ENCODE measurements at regions of chr9 and their contacts with region 1.

Region 1: DNA sequence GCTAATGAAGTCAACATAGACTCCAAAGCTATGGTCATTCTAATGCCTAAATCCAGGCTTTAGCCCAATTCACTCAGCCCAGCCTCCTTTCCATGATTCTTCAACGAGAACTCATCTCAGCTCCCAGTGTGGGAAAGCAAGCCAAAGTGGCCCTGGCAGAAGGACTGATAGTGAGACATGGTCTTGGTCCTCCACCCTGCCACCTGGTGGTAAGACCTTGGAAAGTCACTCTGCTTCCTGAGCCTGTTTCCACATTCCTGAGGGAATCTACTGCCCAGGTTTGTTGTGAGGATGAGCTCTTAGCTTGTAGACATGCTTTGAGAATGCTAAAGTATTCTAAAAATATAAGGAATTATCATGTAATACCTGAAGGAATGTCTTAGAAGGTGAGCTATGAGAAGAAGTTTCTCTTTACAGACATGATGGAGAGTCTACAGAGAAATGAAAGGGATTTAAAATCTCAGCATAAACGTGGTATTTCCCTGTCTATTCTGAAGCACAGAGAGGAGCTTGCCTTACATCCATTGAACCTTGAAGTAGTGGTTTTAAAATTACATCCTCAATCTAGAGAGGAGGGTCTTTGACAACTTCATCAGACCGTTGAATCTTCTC is 173.5 kb downstream of the TRIM32 start:
- DNase-seq: no peak
- ATAC-seq: peak; percentile 78
- H3K4me3 ChIP-seq: no peak overlapping the region
- H3K27ac ChIP-seq: no peak overlapping the region
- H3K4me1 ChIP-seq: no peaks in the 10 kb centered on the region
- H3K27me3 ChIP-seq: no peaks in the 10 kb centered on the region
- CTCF ChIP-seq: peak; percentile 60 to 79 (median 77)
- EP300 ChIP-seq: no peak
- POLR2A ChIP-seq: no peak
- RAD21 ChIP-seq: peak; percentile 64

Region 2: GRCh38 chr9:116837018-116837989 is 23.3 kb before region 1 on chr9:
- CTCF ChIA-PET with region 1: interaction called, 14 read pairs
- POLR2A ChIA-PET with region 1: no interaction called
- RAD21 ChIA-PET with region 1: no interaction called
- SMC1A ChIA-PET with region 1: interaction called, 3 read pairs
- in situ Hi-C with region 1: no loop called
- intact Hi-C with region 1: no loop called
- DNase-seq: no peak
- ATAC-seq: 0 out of 3 replicates have a peak, but pooled peaks have one; percentile 18
- H3K4me3 ChIP-seq: no peak overlapping the region
- H3K27ac ChIP-seq: no peak overlapping the region
- H3K4me1 ChIP-seq: no peaks in the 10 kb centered on the region
- H3K27me3 ChIP-seq: no peaks in the 10 kb centered on the region; a peak in 1 of 4 replicates
- CTCF ChIP-seq: no peak
- EP300 ChIP-seq: no peak
- POLR2A ChIP-seq: no peak
- RAD21 ChIP-seq: no peak

Region 3: DNA sequence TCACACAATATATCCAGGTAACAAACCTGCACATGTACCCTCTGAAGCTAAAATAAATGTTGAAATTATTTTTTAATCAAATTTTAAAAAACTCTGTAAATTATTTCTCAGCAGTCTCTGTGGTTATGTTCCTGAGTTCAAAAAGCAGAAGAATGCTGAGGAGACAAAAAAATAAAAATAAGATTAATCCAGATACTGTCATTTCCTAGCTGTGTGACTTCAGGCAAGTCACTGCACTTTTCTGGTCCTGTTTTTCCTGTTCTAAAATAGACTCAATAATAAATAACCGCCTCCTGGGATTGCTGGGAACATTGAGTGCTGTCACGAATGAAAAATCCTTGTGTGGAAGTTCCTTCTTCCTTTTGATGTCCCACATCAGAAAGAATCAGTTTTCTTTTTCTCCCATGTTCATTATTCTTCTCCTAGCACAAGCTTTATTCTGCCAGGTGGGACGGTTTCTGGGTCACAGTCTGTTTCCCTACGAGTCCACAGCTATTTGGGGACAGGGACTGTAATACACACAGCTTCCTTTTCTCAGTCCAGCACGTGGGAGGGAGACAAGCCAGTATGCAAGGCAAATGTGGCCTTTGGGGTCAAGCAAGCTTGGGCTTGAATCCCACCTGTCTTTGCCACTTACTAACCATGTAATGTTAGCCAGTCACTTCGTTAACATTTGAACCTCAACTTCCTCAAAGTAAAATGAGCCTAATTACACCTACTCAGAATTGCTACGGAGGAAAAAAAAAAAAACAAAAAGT is 16.6 kb before region 1 on chr9:
- CTCF ChIA-PET with region 1: interaction called, 25 read pairs
- POLR2A ChIA-PET with region 1: no interaction called
- RAD21 ChIA-PET with region 1: no interaction called
- SMC1A ChIA-PET with region 1: interaction called, 5 read pairs
- in situ Hi-C with region 1: no loop called
- intact Hi-C with region 1: no loop called
- DNase-seq: no peak
- ATAC-seq: peak; percentile 70
- H3K4me3 ChIP-seq: no peak overlapping the region
- H3K27ac ChIP-seq: no peak overlapping the region
- H3K4me1 ChIP-seq: no peaks in the 10 kb centered on the region
- H3K27me3 ChIP-seq: no peaks in the 10 kb centered on the region
- CTCF ChIP-seq: no peak
- EP300 ChIP-seq: no peak
- POLR2A ChIP-seq: no peak
- RAD21 ChIP-seq: no peak